GM10248 (cell line): ENCODE measurements at regions of chr5 and their contacts with region 1.

Region 1: DNA sequence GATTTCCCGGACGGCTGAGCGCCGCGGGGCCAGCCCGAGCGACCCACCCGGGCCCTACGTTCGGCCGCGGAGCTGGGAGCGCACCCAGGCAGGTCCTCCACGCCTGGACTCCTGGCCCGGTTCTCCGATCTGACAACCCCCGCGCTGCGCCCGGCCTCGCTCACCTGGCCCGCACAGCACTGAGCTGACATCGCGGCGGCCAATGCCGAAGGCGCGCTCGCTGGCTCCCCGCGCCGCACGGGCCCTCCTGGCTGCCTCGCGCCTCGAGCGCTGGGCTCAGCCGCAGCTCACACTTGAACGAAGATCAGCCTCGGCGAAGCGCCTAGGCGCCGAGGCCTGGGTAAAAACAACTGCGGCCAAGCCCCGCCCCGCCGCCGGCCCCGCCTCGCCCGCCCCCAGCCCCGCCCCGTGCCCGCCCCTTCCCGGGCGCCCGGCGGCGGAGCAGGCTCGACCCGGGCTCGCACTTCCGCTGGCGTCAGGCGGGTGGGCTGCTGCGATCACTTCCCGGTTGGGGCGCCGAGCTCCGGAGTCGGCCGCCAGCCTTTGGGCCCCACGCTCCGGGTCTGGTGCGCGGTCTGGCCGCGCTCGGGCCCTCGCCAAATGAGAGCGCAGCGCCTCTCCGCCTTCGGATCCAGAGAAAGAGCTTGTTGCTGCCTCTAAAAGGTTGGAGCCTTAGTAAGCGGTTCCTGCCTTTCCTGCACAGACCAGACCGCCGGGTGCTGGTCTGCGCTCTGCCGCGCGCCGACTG is at the start of gene SERINC5:
- DNase-seq: peak; percentile 95
- CTCF ChIP-seq: no peak

Region 2: DNA sequence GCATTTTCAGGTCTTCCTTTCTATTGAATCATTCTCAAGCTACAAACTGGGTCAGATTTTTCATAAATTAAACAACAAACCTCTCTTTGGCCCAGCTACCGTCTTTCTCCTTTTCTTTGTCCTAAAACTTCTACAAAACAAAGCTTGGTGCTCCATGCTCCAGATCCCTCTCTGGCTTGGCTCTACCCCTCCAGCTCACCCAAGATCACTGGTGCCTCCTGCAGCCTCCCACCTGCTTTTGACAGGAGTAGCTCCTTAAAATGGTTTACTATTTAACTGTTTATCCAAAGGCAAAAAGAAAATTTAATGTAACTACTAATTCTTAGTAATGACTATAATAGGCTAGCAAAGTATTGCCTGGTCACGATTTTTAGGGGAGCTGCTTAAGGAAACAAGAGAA is 10.7 kb after region 1 on chr5:
- CTCF ChIA-PET with region 1: interaction called, 10 read pairs
- POLR2A ChIA-PET with region 1: no interaction called
- DNase-seq: no peak
- CTCF ChIP-seq: no peak